Motor neuron (in vitro differentiated cells): ENCODE measurements at regions of chr9 and their contacts with region 1.

Region 1: DNA sequence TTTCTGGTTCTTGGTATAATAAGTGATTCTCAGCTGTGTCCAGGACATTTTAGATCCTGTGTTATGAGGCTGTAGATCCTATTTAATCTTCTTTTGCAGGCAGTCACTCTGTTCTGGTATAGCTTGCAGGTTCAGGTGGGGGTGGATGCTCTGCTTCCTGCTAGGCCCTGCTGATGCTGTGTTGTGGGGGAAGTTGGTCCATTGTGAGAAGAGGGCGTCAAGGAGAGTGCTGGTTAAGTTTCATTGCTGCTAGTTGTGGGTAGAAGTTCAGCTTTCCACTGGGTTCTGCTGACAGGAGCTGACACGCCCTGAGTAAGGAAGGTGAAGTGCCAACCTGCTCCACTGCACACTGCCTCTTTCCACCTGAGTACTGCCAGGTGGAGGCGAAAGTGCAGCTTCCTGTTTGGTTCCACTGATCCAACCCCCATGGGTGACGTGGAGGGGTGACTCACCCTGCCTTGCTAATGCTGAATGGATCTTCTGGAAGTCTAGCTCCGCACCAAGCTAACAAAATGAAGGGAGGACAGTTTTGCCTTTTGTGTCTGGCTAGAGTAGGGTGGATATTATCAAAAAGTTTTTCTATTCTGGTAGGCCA is 16.3 kb downstream of the NMRK1 start:
- ATAC-seq: no peak
- H3K4me3 ChIP-seq: no peak overlapping the region
- H3K27ac ChIP-seq: no peak overlapping the region
- H3K4me1 ChIP-seq: peaks cover 0 to 7% of the 10 kb centered on the region in 2 donors

Region 2: DNA sequence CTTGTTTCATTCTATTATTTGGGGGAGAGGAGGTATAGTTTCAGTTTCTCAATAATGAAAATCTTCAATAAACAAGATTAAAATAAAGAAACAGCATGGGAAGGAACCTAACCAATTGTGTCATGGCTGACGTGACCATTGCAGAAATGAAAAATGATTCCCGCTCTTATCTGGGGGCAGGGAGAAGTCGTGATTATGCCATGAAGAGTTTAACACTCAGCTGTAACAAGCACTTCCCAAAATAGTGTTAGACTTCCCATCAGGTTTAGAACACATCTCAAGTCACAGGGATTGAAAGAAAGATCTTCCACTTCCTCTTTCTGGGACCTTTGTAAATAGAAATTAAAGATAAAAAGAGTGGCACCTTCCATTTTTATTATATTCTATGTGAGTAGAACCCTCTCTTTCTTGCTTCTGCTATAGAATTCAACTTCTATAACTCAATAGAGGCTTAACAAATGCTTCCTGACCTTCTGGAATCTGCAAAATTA is 306.1 kb before region 1 on chr9:
- in situ Hi-C with region 1: loop called in 4 of 9 experiments (anchors 5 to 10 kb)
- ATAC-seq: no peak
- H3K4me3 ChIP-seq: no peak overlapping the region
- H3K27ac ChIP-seq: no peak overlapping the region
- H3K4me1 ChIP-seq: no peaks in the 10 kb centered on the region

Region 3: DNA sequence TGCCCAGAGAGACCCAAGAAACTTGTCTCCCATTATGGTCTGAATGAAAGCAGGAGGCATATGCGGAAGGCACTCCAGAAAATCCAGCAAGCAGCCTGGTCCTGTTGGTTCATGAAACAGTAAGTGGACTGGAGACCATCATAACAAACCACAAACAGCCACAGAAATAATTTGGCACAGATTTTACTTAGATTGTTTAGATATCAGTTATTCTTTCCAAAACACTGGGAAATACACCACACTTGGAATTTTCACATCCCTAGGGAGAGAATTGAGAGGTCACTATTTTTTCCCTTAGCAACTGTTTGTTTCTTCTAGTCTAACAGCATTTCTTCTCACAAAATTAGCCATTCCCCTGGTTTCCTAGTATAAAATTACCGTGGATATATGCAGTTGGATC is 317.5 kb after region 1 on chr9:
- in situ Hi-C with region 1: no loop called
- ATAC-seq: no peak
- H3K4me3 ChIP-seq: no peak overlapping the region
- H3K27ac ChIP-seq: no peak overlapping the region
- H3K4me1 ChIP-seq: no peaks in the 10 kb centered on the region